ENCODE measurements at regions of chr21 and their contacts with region 1.

Region 1: DNA sequence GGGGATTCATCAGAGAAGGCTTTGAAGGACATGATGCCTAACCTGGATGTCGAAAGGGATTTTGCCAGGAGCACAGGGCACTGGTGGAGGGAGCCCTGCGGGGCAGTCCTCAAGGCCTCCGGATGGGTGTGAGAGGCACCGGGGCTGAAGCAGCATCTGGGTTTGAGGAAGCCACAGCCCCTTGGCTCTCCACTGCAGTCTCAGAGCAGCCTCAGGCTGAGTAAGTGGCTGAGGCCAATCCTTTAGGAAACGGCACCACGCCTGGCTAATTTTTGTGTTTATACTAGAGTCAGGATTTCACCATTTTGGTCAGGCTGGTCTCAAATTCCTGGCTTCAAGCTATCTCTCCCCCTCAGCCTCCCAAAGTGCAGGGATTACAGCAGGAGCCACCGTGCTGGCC is 12.0 kb downstream of the ERVH48-1 start:
- DNase-seq: no peak
- ATAC-seq: peak in 1 of 2 donors; percentile 27
- H3K4me3 ChIP-seq: no peak overlapping the region
- H3K27ac ChIP-seq: no peak overlapping the region
- H3K4me1 ChIP-seq: no peaks in the 10 kb centered on the region
- H3K27me3 ChIP-seq: no peaks in the 10 kb centered on the region

Region 2: DNA sequence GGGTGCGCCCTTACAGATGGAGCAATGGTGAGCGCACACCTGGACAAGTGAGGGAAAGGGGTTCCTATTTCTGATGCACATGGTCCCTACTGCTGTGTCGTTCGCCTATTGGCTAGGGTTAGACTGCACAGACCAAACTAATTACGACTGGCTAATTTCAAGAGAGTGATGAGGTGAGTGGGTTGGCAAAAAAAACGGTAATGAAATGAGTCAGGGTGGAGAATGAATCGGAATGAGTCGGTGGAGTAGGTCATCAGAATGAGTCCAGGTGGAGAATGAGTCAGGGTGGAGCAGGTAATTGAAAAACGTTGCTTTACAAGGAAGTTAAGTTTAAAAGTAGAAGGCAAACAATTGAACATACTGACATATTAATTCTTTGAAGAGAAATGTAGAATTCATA is 114.0 kb before region 1 on chr21:
- intact Hi-C with region 1: no loop called
- DNase-seq: no peak
- ATAC-seq: no peak
- H3K4me3 ChIP-seq: no peak overlapping the region
- H3K27ac ChIP-seq: no peak overlapping the region
- H3K4me1 ChIP-seq: no peaks in the 10 kb centered on the region
- H3K27me3 ChIP-seq: no peaks in the 10 kb centered on the region

Region 3: GRCh38 chr21:42964546-42965225 is 51.2 kb after region 1 on chr21:
- intact Hi-C with region 1: loop called in 1 of 4 experiments (anchors 10 kb)
- DNase-seq: no peak
- ATAC-seq: no peak
- H3K4me3 ChIP-seq: no peak overlapping the region
- H3K27ac ChIP-seq: no peak overlapping the region
- H3K4me1 ChIP-seq: no peaks in the 10 kb centered on the region
- H3K27me3 ChIP-seq: no peaks in the 10 kb centered on the region

Region 4: DNA sequence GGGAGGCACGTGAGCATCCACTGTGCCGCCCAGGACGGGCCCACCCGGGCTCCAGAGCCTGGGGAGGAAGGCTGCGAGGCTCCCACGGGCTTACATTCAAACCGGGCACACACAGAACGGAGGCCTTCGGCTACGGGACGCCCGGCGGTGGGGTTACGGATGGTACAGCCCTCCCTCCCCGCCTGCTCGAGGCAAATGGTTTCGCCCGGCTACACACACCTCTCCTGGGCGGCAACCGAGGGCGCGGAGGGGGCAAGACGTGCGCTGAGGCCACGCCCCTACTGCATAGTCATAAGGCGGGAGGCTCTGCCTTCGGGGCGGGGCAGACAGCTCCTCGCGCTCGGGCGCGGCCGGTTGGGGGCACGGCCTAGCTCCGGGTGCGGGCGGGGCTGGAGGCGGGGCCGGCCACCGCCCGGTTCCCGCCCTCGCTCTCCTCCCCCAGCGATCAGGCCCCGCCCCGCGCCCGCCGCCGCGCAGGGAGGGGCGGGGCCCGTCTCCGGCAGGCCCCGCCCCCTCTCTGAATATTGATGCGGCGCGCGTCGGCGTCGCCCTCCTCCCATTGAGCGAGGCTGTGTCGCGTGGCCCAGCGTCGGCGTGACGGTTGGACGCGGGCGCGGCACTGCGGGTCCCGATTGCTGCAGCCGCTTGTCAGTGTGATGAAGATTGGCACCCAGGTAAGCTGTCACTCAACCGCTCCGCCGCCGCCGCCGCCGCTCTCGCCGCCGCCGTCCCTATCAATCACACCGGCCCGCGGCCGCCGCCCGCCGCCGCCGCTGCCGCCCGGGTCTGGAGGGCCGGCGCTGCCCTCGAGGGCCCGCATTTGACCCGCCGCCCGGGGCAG is 60.7 kb after region 1 on chr21 and contains the start of gene PKNOX1:
- intact Hi-C with region 1: loop called in 2 of 4 experiments (anchors 10 kb)
- DNase-seq: peak; percentile 99 to 100 (median 100)
- ATAC-seq: peak; percentile 96 to 97
- H3K4me3 ChIP-seq: peak within 1 kb of the TSS; percentile 95
- H3K27ac ChIP-seq: peak within 1 kb of the TSS; percentile 94
- H3K4me1 ChIP-seq: no peaks in the 10 kb centered on the region
- H3K27me3 ChIP-seq: no peaks in the 10 kb centered on the region
- total RNA-seq, gene PKNOX1: 4.5 to 9.0 (median 7.8) TPM

Measured in right cardiac atrium (tissue), 5 donors.